ENCODE measurements at regions of chr20 and their contacts with region 1.

Region 1: GRCh38 chr20:2402271-2402980 is 21.7 kb downstream of the TGM6 start:
- DNase-seq: peak; percentile 22 to 47 (median 40)
- H3K4me3 ChIP-seq: no peak overlapping the region
- H3K27ac ChIP-seq: no peak overlapping the region
- H3K4me1 ChIP-seq: no peaks in the 10 kb centered on the region
- H3K27me3 ChIP-seq: peaks cover 0 to 23% (median 0%) of the 10 kb centered on the region in 5 experiments

Region 2: GRCh38 chr20:2206957-2207769 is 195.3 kb before region 1 on chr20:
- CTCF ChIA-PET with region 1: interaction called, 22 read pairs
- POLR2A ChIA-PET with region 1: no interaction called
- DNase-seq: peak; percentile 50 to 77 (median 69)
- H3K4me3 ChIP-seq: peak overlapping the region; percentile 31 to 74 (median 66)
- H3K27ac ChIP-seq: no peak overlapping the region
- H3K4me1 ChIP-seq: peaks cover 0 to 17% (median 12%) of the 10 kb centered on the region in 4 experiments
- H3K27me3 ChIP-seq: peaks cover 2 to 71% (median 18%) of the 10 kb centered on the region in 5 experiments

Region 3: DNA sequence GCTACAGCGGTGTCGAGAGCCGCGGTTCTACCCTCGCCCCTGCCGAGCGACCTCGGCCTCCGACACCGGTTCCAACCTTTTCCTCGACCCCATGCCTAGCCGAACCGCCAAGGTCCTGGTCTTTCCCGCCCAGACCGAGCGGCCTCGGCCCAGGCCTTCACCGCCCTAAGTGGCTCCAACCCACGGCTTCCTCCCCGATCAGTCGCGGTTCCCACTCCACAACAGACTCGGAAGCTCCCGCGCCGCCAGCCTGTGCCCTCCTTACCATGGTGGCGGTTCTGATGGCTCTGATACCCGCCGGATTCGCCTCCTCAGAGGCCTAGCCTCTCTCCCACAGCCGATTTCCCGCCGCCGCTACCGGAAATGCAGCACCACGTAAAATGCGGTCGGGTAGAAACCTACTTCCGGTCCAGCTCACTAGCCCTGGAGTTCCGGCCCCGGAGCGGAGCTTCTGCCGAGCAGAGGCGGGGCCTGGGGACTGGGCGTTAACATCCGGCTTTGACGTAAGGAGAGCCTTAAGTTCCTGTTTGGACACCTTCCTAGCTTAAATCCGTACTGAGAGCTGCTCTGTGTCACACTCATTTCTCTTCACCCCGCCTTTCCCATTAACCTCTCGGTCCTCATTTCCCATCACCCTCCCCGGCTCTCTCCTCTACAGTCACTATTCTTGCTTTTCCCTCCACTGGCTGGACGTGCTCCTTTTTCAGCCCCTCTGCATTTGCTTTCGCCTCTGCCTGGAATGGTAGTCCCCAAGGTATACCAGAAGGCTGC is 68.2 kb after region 1 on chr20 and contains the start of gene SNRPB:
- CTCF ChIA-PET with region 1: no interaction called
- POLR2A ChIA-PET with region 1: no interaction called
- DNase-seq: peak; percentile 99
- H3K4me3 ChIP-seq: peak within 1 kb of the TSS; percentile 70 to 97 (median 91)
- H3K27ac ChIP-seq: peak within 1 kb of the TSS; percentile 90 to 95
- H3K4me1 ChIP-seq: peaks cover 8 to 26% (median 21%) of the 10 kb centered on the region in 4 experiments
- H3K27me3 ChIP-seq: no peaks in the 10 kb centered on the region